ENCODE measurements at regions of chr14 and their contacts with region 1.

Region 1: DNA sequence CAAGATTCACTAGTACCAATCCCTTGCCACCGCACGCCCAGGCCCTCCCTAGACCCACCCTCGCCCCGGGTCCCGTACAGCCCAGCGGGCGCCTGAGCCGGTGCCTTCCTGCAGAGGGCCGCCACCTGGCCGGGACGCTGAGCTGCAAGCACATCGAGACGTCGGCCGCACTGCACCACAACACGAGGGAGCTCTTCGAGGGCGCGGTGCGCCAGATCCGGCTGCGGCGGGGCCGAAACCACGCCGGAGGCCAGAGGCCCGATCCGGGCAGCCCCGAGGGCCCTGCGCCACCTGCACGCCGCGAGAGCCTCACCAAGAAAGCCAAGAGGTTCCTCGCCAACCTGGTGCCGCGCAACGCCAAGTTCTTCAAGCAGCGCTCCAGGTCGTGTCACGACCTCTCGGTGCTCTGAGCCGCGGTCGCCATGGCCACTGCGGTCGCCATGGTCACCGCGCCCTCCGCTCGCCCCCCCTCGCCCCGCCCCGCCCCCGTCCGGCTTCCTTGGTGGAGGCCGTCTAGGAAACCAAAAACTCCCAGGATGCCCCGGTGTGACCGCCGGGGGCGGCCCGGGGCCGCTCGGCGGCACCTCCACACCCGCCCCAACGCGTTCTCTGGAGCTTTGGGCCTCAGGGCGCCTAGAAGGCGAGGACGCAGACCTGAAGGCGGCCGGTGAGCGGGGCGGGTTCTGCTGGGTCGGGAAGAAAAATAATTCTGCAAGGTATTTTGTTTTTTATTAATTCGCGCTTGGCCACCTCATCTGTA is 3.7 kb downstream of the REM2 start:
- DNase-seq: peak; percentile 53 to 85 (median 65)
- ATAC-seq: peak; percentile 76 to 80
- H3K4me3 Mint-ChIP-seq: peak overlapping the region; percentile 82 to 94 (median 90)
- H3K27ac Mint-ChIP-seq: peak overlapping the region; percentile 90 to 95 (median 92)
- H3K4me1 Mint-ChIP-seq: peaks cover 35 to 67% (median 66%) of the 10 kb centered on the region in 4 donors
- H3K27me3 Mint-ChIP-seq: no peaks in the 10 kb centered on the region

Region 2: GRCh38 chr14:22861651-22862050 is 25.0 kb before region 1 on chr14:
- POLR2A ChIA-PET with region 1: interaction called, 24 read pairs
- DNase-seq: no peak
- ATAC-seq: no peak
- H3K4me3 Mint-ChIP-seq: no peak overlapping the region
- H3K27ac Mint-ChIP-seq: no peak overlapping the region
- H3K4me1 Mint-ChIP-seq: peaks cover 6 to 23% (median 19%) of the 10 kb centered on the region in 4 donors
- H3K27me3 Mint-ChIP-seq: peaks cover 0 to 14% (median 11%) of the 10 kb centered on the region in 5 donors

Region 3: DNA sequence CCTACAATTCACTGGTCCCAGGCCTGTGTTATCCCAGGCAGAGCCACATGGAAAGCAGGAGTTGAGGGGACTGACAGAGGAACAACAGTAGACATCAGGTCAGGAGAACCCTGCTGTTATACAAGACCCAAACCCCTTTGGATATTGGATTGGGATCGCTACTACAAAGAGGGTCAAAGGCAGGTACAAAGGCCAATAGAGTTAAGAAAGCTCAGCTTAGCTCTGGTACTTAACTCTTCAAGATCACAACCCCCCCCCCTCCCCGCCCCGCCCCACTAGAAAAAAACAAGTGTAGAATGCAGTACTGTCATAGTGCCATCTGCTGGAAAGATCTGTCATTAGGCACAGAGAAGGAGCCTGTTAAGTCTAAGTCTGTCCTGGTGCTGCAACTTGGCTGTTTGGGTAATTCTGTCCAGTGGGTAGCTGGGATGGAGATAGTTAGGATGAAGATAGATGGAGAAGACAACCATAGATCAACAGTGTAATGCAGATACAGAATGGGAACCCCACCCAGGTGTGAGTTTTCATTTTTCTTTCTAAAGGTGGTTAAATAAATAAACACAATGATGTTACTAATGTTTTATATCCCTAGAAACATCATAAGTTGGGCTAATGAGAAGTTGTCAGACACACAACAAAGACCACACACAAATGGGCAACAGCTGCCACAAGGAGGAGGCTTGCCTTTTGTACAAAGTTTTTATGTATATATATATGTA is 13.6 kb after region 1 on chr14:
- POLR2A ChIA-PET with region 1: interaction called, 17 read pairs
- DNase-seq: peak in 9 of 10 donors; percentile 14 to 70 (median 41)
- ATAC-seq: peak; percentile 81 to 82
- H3K4me3 Mint-ChIP-seq: no peak overlapping the region
- H3K27ac Mint-ChIP-seq: peak overlapping the region in 5 of 10 donors; percentile 26 to 73 (median 38)
- H3K4me1 Mint-ChIP-seq: peaks cover 6 to 11% (median 6%) of the 10 kb centered on the region in 4 donors
- H3K27me3 Mint-ChIP-seq: no peaks in the 10 kb centered on the region

Region 4: GRCh38 chr14:22918804-22919600 is 32.3 kb after region 1 on chr14 and contains the start of gene RBM23:
- POLR2A ChIA-PET with region 1: interaction called, 13 read pairs
- DNase-seq: peak; percentile 97 to 100 (median 100)
- ATAC-seq: peak; percentile 88 to 89
- H3K4me3 Mint-ChIP-seq: peak within 1 kb of the TSS; percentile 90 to 100 (median 98)
- H3K27ac Mint-ChIP-seq: peak within 1 kb of the TSS; percentile 100
- H3K4me1 Mint-ChIP-seq: peaks cover 13 to 55% (median 38%) of the 10 kb centered on the region in 4 donors
- H3K27me3 Mint-ChIP-seq: peaks cover 0 to 5% (median 0%) of the 10 kb centered on the region in 5 donors
- polyA plus RNA-seq, gene RBM23: 42.2 to 62.8 (median 59.6) TPM

Region 5: DNA sequence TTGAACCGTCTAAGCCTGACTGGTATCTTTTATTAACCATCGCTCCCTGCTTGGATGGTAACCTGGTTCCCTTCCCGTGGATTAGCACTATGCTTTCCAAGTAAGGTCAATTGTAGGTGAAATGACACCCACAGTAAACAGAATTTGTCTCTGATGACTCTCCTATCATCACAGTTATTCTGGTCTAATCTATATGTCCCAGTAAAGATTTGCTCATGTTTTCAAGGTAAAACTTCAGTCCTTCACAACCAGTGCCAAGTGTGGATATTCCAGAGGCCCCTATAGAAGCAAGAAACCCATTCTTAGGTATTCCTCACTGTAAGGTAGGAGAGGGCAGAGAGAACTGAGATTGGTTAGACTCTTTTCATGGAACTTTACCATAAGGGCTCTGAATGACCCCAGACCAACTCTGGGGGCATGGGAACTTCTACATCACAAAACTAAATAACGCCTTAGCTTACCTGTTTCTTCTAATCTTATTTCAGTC is 80.1 kb after region 1 on chr14:
- POLR2A ChIA-PET with region 1: no interaction called
- DNase-seq: no peak
- ATAC-seq: no peak
- H3K4me3 Mint-ChIP-seq: no peak overlapping the region
- H3K27ac Mint-ChIP-seq: no peak overlapping the region
- H3K4me1 Mint-ChIP-seq: no peaks in the 10 kb centered on the region
- H3K27me3 Mint-ChIP-seq: peaks cover 0 to 2% (median 0%) of the 10 kb centered on the region in 5 donors

Measured in naive thymus-derived CD8-positive, alpha-beta T cell (primary cell).